Common myeloid progenitor, CD34-positive (primary cell): ENCODE measurements at regions of chr1 and their contacts with region 1.

Region 1: DNA sequence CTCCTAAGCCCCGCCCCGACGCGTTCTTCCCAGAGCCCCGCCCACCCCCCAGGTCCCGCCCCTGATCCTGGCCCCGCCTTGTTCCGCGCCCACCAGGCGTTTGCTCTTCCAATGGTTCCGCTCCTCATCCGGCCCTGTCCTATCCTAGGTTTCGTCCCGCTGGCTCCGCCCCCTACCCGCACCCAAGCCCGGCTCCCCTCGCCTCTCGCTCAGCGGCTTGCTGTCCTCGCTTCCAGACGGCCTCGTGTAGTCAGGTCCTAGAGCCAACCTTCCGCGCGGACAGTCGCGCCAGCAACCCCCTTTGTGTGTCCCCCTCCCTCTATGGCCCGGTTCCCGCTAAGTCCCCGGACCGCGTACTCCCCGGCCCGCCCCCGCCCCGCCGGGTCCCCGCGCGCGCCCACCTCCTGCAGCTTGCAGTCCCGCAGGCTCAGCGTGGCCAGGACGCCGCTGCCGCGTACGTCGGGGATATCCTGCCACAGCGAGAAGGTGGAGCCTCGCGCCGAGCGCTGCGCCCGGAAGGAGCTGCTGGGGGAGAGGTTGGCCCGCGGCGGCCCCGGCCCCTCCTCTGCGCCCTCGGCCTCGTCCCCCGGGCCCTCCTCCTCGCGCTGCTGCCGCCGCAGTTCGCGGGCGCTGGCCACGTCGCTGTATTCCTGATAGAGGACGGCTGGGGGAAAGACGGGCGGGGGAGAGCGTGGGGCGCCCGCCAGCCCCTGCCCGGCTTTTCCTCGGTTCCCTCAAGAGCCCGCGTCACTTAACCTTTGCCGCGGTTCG is 5.7 kb downstream of the ARHGEF19 start:
- DNase-seq: peak; percentile 97 to 98 (median 98)
- H3K4me3 ChIP-seq: peak overlapping the region; percentile 39 to 82 (median 65)
- H3K27ac ChIP-seq: peak overlapping the region; percentile 40 to 83
- H3K4me1 ChIP-seq: peaks cover 0 to 17% (median 14%) of the 10 kb centered on the region in 4 experiments
- H3K27me3 ChIP-seq: peaks cover 0 to 3% (median 0%) of the 10 kb centered on the region in 5 experiments

Region 2: DNA sequence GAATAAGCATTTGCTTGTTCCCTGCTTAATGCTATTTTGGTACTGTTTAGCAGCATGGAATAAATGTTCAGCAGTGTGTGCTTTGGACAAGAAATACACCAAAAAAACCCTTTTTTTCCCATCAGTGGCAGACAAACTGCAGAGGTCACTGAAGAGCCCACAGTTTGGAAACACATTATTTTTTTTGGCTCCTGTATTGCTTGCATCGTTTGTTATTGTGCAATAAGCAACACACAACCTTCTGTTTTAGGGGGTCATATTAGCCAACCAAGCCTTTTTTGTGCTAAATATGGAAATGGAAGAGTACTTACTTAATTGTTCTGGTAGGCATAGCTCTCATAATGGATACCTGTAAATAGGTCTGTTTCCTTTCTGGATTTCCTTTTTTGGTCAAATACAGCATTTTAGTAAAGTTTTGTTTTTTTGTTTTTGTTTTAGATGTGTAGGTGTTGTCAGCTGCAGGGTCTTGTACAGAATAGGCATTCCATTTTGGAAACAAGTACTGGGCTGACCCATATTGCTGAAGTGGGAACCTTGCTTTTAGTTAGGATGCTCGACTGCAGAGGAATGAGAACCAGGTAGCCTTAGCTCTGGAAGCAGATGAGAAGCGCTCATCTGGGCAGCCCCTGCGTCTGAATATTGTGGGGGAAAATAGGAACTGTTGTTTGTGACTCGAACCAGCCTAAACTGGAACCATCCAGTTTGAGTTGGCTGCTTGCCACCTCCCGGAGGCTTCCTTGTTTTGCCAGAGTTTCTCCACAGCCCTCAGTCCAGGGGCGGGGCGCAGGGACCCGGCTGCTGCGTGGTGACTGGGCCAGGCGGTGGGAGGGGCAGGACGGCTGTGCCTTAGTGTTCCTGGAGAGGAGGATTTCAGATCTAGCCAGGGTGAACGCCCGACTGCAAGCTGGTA is 320.8 kb before region 1 on chr1:
- CTCF ChIA-PET with region 1: no interaction called
- POLR2A ChIA-PET with region 1: no interaction called
- DNase-seq: peak; percentile 89 to 95 (median 94)
- H3K4me3 ChIP-seq: peak overlapping the region; percentile 33 to 79 (median 63)
- H3K27ac ChIP-seq: peak overlapping the region; percentile 75 to 91
- H3K4me1 ChIP-seq: peaks cover 14 to 45% (median 34%) of the 10 kb centered on the region in 4 experiments
- H3K27me3 ChIP-seq: no peaks in the 10 kb centered on the region

Region 3: DNA sequence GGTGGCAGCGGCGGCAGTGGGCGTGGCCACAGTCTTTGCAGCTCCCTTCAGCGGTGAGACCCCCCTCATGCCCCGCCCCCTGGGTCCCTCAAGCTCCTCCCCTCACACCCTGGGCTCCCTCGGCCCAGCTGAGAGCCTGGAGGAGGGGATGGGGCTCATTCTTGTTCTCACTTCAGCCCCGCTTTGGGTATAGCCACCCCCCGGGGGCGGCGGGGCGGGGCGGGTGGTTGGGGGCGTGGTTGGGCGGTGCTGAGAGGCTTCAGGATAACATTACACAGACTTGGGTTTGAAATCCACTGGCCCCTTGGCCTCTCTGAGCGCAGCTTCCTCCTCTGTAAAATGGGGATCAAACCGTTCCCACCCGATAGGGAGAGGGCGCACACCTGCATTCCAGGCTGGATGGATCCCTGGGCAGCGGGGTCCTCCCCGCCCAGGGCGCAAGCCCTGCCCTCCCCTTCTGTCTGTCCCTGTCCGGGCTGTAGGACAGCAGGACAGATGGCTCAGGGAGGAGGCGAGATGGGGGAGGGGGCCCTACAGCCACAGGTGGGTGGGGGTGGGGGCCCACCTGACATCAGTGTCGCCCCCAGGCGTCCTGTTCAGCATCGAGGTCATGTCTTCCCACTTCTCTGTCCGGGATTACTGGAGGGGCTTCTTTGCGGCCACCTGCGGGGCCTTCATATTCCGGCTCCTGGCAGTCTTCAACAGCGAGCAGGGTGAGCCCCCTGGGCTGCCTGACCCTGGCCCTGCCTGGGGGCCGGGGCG is 179.8 kb before region 1 on chr1:
- CTCF ChIA-PET with region 1: no interaction called
- POLR2A ChIA-PET with region 1: no interaction called
- DNase-seq: peak; percentile 54 to 73 (median 72)
- H3K4me3 ChIP-seq: peak overlapping the region in 3 of 7 experiments; percentile 28 to 47 (median 36)
- H3K27ac ChIP-seq: no peak overlapping the region
- H3K4me1 ChIP-seq: peaks cover 0 to 7% (median 5%) of the 10 kb centered on the region in 4 experiments
- H3K27me3 ChIP-seq: peaks cover 0 to 21% (median 0%) of the 10 kb centered on the region in 5 experiments

Region 4: DNA sequence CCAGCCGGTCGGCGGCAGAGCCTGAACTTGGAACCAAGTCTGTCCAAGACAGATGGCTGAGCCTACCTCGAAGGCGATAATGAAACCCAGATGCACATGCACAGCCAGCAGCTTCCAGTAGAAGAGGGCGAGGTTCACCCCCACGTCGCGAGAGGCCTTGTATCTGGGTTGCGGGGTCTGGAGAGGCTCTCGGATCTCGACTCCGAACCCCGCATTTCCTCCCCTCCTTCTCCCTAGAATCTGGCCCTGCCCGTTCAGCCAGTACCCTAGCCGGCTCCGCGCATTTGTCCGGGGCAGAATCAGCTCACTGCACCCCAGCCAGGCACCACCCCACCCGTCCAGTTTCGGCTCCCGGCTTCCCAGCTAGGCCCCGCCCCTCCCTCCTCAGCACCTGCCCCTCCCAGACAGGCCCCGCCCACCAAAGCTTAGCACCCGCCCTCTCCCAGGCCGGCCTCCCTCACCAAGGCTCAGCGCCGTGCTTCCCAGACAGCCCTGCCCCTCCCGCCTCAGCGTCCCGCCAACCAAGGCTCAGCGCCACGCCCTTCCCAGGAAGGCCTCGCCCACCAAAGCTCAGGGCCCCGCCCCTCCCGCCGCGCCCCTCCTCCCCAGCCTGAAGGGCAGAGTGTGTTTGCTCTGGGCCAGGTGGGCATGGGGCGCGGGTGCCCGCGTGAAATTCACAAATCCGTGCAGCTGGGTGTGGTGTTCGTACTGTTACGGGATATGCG is 10.5 kb after region 1 on chr1:
- CTCF ChIA-PET with region 1: interaction called, 17 read pairs
- POLR2A ChIA-PET with region 1: interaction called, 6 read pairs
- DNase-seq: peak; percentile 94 to 97 (median 96)
- H3K4me3 ChIP-seq: peak overlapping the region; percentile 8 to 77 (median 63)
- H3K27ac ChIP-seq: peak overlapping the region in 1 of 2 experiments; percentile 61
- H3K4me1 ChIP-seq: peaks cover 6 to 20% (median 14%) of the 10 kb centered on the region in 4 experiments
- H3K27me3 ChIP-seq: peaks cover 0 to 9% (median 0%) of the 10 kb centered on the region in 5 experiments

Region 5: DNA sequence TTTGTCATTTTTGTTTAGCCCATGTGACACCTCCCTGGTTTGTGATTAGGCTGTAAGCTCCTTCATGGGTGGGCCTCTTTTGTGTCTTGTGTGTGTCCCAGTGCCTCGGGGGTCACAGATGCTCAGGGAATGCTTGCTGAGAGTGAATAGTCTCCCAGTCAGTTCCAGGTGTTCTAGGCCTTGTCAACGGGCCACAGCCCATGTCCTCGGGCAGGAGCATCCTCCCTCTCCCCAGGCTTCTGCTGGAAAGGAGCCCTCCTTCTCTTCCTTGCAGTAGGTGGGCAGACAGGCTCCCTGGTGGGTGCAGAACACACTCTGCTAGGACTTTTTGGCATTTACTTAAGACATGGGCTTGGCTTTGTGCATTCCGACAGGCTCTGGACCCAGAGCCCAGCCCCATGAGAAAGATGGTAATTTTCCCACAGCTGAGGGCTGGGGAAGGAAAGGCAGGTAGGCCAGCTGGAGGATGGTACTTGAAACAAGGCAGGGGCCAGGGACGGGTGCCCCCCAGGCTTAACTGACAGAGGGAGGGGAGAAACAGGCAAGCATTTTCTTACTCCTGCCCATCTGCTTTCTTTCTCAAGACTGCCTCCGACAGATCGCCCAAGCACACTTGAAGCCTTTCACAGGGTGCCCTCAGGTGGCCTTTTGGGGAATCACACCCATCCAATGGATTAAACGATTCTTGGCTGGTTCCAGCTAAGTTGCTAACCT is 37.4 kb after region 1 on chr1:
- CTCF ChIA-PET with region 1: interaction called, 48 read pairs
- POLR2A ChIA-PET with region 1: no interaction called
- DNase-seq: peak; percentile 80 to 91 (median 86)
- H3K4me3 ChIP-seq: no peak overlapping the region
- H3K27ac ChIP-seq: no peak overlapping the region
- H3K4me1 ChIP-seq: peaks cover 17 to 33% (median 23%) of the 10 kb centered on the region in 4 experiments
- H3K27me3 ChIP-seq: no peaks in the 10 kb centered on the region